Caco-2 (cell line): ENCODE measurements at regions of chr6 and their contacts with region 1.

Region 1: DNA sequence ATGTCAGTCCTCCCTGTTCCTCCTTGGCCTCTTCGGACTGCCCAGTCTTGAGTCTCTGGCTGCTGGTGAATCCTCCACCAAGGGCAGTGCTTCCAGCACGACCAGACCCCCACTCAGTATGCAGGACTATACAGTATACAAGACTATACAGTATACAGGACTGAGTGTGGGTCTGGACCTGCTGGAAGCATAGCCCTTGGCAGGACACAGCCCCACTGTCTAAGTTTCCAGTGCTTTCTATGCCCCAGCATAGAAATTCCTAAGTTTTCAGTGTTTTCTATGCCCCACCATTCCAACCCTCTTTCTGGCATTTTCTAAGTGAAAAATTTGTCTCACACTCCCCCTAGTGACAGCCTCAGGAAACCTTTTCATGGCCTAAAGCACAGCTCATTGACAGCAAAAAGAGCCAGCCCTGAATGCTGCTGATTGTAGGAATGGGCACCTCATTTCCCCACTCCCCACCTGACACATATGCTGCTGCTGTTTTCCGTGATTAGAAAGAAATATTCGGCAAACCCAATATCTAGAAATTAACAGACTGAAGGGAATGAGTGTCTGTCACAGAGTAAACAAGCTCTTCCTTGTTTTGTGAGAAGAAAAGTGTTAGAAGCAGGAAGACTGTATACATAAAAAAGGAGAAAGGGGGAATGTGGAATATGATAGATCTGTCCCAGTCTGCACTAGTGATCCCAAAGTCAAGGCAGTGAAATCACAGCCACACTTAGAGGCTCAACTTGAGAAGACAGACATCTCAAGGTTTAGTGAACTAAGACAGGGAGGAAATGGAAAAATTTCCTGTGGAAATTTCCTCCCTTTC is 206.9 kb downstream of the IBTK start:
- DNase-seq: peak; percentile 53 to 70
- H3K4me3 ChIP-seq: no peak overlapping the region
- H3K4me3 Mint-ChIP-seq: no peak overlapping the region
- H3K27ac Mint-ChIP-seq: peak overlapping the region; percentile 45
- H3K4me1 ChIP-seq: peaks cover 4% of the 10 kb centered on the region; the same call in 1 of the 2 replicates
- H3K4me1 Mint-ChIP-seq: no peaks in the 10 kb centered on the region
- H3K27me3 ChIP-seq: no peaks in the 10 kb centered on the region
- H3K27me3 Mint-ChIP-seq: no peaks in the 10 kb centered on the region
- CTCF ChIP-seq: peak; percentile 87

Region 2: GRCh38 chr6:81241126-81242041 is 799.2 kb before region 1 on chr6:
- CTCF ChIA-PET with region 1: interaction called, 4 read pairs
- POLR2A ChIA-PET with region 1: no interaction called
- intact Hi-C with region 1: loop called (anchors 1 kb)
- DNase-seq: peak in 1 of 2 experiments; percentile 38
- H3K4me3 ChIP-seq: no peak overlapping the region
- H3K4me3 Mint-ChIP-seq: no peak overlapping the region
- H3K27ac Mint-ChIP-seq: no peak overlapping the region
- H3K4me1 ChIP-seq: no peaks in the 10 kb centered on the region
- H3K4me1 Mint-ChIP-seq: no peaks in the 10 kb centered on the region
- H3K27me3 ChIP-seq: no peaks in the 10 kb centered on the region
- H3K27me3 Mint-ChIP-seq: peaks cover 3% of the 10 kb centered on the region
- CTCF ChIP-seq: peak; percentile 34 to 41

Region 3: DNA sequence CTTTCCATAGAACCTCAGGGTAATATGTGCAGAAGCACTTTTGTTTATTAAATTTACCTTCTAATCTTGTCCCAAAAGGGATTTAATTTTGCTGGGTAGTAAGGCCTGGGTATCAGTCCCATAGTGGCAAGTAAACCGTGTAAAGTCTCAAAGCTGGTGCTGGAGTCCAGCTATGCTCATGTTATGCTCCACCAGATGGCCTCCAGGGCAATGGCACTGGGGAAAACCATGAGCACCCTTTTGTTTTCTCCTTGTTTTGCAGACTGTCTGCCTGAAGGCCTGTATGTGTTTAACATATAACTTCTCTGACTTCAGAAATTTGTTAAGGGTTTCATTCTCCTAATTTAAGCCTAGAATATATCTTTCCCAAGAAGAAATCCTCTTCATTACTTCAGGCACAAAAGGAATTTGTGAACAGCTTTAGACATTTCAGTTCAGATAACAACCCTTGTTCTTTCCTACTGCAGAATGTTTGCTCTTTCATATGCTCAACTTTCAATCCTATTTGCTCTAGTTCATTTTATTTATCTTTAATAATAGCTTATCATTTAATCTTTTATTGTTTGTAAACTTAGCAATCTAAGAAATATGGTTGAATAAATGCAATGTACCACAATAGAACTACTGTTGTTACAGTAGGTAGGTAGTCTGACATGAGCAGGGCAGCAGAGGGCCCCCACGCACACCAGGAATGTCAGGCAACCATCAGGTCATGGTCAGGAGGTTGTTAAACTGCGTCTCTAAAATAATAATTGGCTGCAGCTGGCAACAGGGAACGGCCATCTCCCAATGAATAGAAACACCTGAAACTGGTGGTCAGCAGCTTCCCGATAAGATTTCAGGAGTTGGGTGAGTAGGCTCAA is 450.9 kb before region 1 on chr6:
- CTCF ChIA-PET with region 1: interaction called, 3 read pairs
- POLR2A ChIA-PET with region 1: no interaction called
- intact Hi-C with region 1: loop called (anchors 10 kb)
- DNase-seq: peak; percentile 49 to 59
- H3K4me3 ChIP-seq: no peak overlapping the region
- H3K4me3 Mint-ChIP-seq: no peak overlapping the region
- H3K27ac Mint-ChIP-seq: peak overlapping the region; percentile 29
- H3K4me1 ChIP-seq: peaks cover 22% of the 10 kb centered on the region
- H3K4me1 Mint-ChIP-seq: peaks cover 18% of the 10 kb centered on the region
- H3K27me3 ChIP-seq: no peaks in the 10 kb centered on the region
- H3K27me3 Mint-ChIP-seq: no peaks in the 10 kb centered on the region
- CTCF ChIP-seq: peak in 1 of 2 experiments; percentile 50

Region 4: DNA sequence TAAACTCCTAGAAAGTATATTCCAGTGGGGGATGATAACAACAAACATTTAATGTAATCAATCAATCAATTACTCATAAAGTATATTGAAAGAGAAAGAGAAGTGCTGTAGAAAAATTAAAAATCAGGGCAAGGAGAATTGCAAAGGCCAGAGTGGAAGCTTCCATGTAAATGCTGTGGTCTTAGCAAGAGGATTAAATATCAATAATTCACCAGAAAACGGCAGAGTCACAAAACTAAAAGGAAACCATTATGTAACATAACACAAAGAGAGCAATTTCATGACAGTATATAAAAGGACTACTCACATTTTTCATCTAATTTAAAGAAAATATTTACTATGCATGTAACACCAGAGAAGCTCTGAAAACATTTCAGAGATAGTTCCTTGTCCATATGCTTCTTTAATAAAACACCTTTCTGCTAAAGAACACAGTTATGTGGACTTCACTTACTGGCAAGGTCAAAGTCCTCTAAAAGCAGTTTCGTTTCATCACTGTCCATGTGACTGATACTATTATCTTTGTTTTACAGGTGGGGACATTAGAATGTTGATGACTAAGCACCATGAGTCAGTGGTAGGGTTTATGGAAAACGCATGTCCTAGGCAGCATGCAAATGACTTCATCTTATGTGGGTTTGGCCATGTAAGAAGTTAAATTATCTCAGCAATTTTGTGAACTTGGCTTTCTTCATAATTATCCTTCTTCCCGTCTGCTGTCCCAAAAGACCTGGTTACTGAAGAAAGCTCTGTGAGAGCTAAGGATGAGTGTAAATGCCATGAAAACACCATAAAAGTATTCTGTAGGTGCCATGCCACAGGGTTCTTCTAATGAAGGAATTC is 102.4 kb before region 1 on chr6:
- CTCF ChIA-PET with region 1: no interaction called
- POLR2A ChIA-PET with region 1: no interaction called
- intact Hi-C with region 1: loop called (anchors 2 kb)
- DNase-seq: peak; percentile 69 to 72
- H3K4me3 ChIP-seq: peak overlapping the region; percentile 12; the same call in 1 of the 2 replicates
- H3K4me3 Mint-ChIP-seq: peak overlapping the region; percentile 64
- H3K27ac Mint-ChIP-seq: peak overlapping the region; percentile 95
- H3K4me1 ChIP-seq: peaks cover 55% of the 10 kb centered on the region
- H3K4me1 Mint-ChIP-seq: peaks cover 40% of the 10 kb centered on the region
- H3K27me3 ChIP-seq: no peaks in the 10 kb centered on the region
- H3K27me3 Mint-ChIP-seq: no peaks in the 10 kb centered on the region
- CTCF ChIP-seq: no peak

Region 5: GRCh38 chr6:82178077-82178758 is 137.6 kb after region 1 on chr6:
- CTCF ChIA-PET with region 1: interaction called, 3 read pairs
- POLR2A ChIA-PET with region 1: no interaction called
- intact Hi-C with region 1: loop called (anchors 1 kb)
- DNase-seq: no peak
- H3K4me3 ChIP-seq: no peak overlapping the region
- H3K4me3 Mint-ChIP-seq: no peak overlapping the region
- H3K27ac Mint-ChIP-seq: no peak overlapping the region
- H3K4me1 ChIP-seq: peaks cover 15% of the 10 kb centered on the region
- H3K4me1 Mint-ChIP-seq: peaks cover 13% of the 10 kb centered on the region
- H3K27me3 ChIP-seq: no peaks in the 10 kb centered on the region
- H3K27me3 Mint-ChIP-seq: no peaks in the 10 kb centered on the region
- CTCF ChIP-seq: peak; percentile 36 to 50

Region 6: DNA sequence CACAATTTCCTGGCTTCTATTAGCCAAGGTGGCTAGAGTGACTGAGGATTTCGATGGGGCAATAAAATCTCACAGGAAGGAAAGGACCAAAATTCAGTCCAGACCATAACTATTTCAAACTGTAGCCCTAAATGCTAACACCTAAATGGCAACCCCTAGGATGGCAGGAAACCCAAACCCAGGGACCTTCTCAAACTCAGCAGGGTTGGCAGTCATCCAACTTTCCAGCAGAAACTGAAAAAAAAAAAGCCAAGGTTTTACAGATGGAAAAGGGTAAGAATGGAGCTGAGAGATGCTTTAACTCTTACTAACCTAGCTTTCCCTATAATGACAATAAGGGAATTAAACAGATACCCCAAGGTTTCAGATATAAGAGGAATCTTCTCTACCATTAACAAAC is 196.4 kb after region 1 on chr6:
- CTCF ChIA-PET with region 1: no interaction called
- POLR2A ChIA-PET with region 1: no interaction called
- intact Hi-C with region 1: no loop called
- DNase-seq: no peak
- H3K4me3 ChIP-seq: no peak overlapping the region
- H3K4me3 Mint-ChIP-seq: no peak overlapping the region
- H3K27ac Mint-ChIP-seq: no peak overlapping the region
- H3K4me1 ChIP-seq: no peaks in the 10 kb centered on the region
- H3K4me1 Mint-ChIP-seq: no peaks in the 10 kb centered on the region
- H3K27me3 ChIP-seq: no peaks in the 10 kb centered on the region
- H3K27me3 Mint-ChIP-seq: no peaks in the 10 kb centered on the region
- CTCF ChIP-seq: no peak